Activated naive CD4-positive, alpha-beta T cell treated with anti-CD3 and anti-CD28 coated beads for 36 hours (primary cell): ENCODE measurements at regions of chr5 and their contacts with region 1.

Region 1: DNA sequence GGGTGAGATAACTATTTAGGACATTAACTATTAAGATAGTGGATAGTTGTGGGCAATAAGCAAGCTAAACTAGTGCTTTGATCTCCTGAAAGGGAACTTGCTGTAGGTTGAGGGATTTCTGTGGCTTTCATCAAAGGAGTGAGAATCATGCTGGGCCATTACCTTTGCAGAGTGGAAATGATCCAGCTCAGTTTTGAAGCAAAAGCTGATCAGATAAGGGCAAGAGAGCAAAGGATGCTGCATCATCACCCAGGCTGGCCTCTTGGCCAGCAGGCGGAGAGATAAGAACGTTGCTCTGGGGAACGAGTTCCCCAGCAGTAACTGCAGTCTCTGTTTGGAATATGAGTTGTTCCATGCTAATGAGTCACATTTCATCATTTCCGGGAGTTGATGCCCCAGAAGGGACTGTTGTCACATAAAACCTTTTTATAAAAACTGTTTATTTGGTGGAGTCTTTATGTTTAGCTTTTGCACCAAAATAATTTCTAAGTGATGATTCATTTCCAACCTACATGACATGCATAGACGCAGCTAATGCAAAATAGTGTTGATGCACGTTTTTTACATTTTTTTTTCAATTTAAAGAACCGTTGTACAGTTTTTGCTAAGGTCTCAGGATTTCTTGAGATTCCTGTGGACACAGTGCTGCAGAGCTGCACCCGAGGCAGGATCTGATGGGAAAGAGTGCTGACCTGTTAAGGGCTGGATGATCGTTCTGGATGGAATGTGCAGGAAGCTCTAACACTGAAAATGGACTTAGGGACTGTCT is 99.3 kb downstream of the ACTBL2 start:
- DNase-seq: peak; percentile 55
- H3K4me3 Mint-ChIP-seq: no peak overlapping the region
- H3K27ac Mint-ChIP-seq: peak overlapping the region; percentile 6
- H3K4me1 Mint-ChIP-seq: peaks cover 10% of the 10 kb centered on the region
- H3K27me3 Mint-ChIP-seq: peaks cover 1% of the 10 kb centered on the region

Region 2: DNA sequence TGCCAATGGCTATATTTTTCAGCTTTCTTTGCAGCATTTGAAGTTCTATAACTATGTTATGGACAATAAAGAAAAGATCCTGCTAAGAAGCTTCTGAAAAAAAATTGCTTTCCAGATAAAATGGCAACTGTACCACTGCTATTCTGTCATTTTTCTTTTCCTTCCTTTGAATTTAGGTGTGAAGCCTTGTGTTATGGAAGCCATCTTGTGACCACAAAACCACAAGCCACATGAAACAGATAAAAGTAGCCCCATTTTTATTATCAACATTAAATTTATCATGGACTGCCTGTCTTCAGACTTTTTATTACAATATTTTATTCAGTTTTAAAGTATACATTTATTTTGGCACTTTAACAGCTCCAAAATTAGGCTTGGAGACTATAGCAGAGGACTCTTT is 389.2 kb after region 1 on chr5:
- CTCF ChIA-PET with region 1: no interaction called
- intact Hi-C with region 1: loop called (anchors 5 kb)
- DNase-seq: no peak
- H3K4me3 Mint-ChIP-seq: no peak overlapping the region
- H3K27ac Mint-ChIP-seq: no peak overlapping the region
- H3K4me1 Mint-ChIP-seq: peaks cover 1% of the 10 kb centered on the region
- H3K27me3 Mint-ChIP-seq: peaks cover 10% of the 10 kb centered on the region